Naive thymus-derived CD4-positive, alpha-beta T cell (primary cell): ENCODE measurements at regions of chr1 and their contacts with region 1.

Region 1: DNA sequence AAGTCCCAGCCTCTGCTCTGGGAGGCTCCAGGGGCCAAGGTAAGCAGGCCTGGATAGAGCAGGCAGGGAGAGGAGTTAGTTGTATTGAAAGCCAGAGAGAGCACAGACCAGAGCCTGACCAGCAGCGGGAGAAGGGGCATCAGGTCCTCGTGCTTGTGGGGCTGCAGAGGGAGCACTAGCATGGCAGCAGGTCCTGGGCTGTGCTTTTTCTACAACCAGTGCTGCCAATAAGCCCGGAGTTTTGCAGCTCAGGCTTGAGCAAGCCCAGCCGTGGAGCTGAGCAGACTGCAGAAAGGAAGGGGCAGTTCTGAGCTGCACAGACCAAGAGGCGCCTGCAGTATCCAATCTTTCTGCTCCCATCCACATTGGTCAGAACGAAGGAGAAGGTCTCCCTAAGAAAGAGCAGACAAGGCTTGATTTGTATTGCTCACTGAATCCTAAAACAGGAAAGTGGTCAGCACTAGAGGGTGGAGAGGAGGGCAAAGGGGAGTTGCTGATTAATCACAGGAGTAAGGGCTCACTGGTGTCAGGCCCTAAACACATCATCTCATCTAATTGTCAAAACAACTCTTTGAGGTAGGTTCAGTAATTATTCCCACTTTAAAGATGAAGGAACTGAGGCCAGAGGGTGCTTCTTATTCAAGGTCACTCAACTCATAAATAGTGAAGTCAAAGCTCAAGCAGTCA is 2.7 kb downstream of the DENND2D start:
- DNase-seq: peak in 7 of 9 donors; percentile 57 to 84 (median 78)
- ATAC-seq: peak; percentile 61
- H3K4me3 ChIP-seq: peak overlapping the region; percentile 84
- H3K4me3 Mint-ChIP-seq: peak overlapping the region; percentile 90 to 100 (median 99)
- H3K27ac ChIP-seq: peak overlapping the region; percentile 90
- H3K27ac Mint-ChIP-seq: peak overlapping the region; percentile 92 to 99 (median 96)
- H3K4me1 ChIP-seq: peaks cover 57 to 66% of the 10 kb centered on the region in 2 donors
- H3K4me1 Mint-ChIP-seq: peaks cover 47 to 75% (median 66%) of the 10 kb centered on the region in 7 donors
- H3K27me3 ChIP-seq: no peaks in the 10 kb centered on the region
- H3K27me3 Mint-ChIP-seq: no peaks in the 10 kb centered on the region

Region 2: GRCh38 chr1:111139956-111140679 is 57.6 kb before region 1 on chr1 and contains the starts of genes CEPT1 and DRAM2:
- CTCF ChIA-PET with region 1: interaction called, 3 read pairs
- POLR2A ChIA-PET with region 1: interaction called, 9 read pairs
- intact Hi-C with region 1: loop called in 1 of 2 experiments (anchors 5 kb)
- DNase-seq: peak; percentile 77 to 93 (median 89)
- ATAC-seq: peak; percentile 95
- H3K4me3 ChIP-seq: peak within 1 kb of the TSS; percentile 91
- H3K4me3 Mint-ChIP-seq: peak within 1 kb of the TSS; percentile 87 to 100 (median 98)
- H3K27ac ChIP-seq: peak within 1 kb of the TSS; percentile 93
- H3K27ac Mint-ChIP-seq: peak within 1 kb of the TSS; percentile 91 to 100 (median 97)
- H3K4me1 ChIP-seq: peaks cover 18 to 22% of the 10 kb centered on the region in 2 donors
- H3K4me1 Mint-ChIP-seq: peaks cover 40 to 75% (median 57%) of the 10 kb centered on the region in 7 donors
- H3K27me3 ChIP-seq: no peaks in the 10 kb centered on the region
- H3K27me3 Mint-ChIP-seq: no peaks in the 10 kb centered on the region
- total RNA-seq, gene CEPT1: 39.1 to 57.5 (median 40.2) TPM
- total RNA-seq, gene DRAM2: 26.9 to 51.6 (median 43.5) TPM

Region 3: GRCh38 chr1:111208922-111209321 is 11.2 kb after region 1 on chr1:
- CTCF ChIA-PET with region 1: interaction called, 341 read pairs
- POLR2A ChIA-PET with region 1: interaction called, 1,128 read pairs
- intact Hi-C with region 1: no loop called
- DNase-seq: no peak
- ATAC-seq: no peak
- H3K4me3 ChIP-seq: no peak overlapping the region
- H3K4me3 Mint-ChIP-seq: no peak overlapping the region
- H3K27ac ChIP-seq: no peak overlapping the region
- H3K27ac Mint-ChIP-seq: peak overlapping the region in 5 of 9 donors; percentile 2 to 99 (median 50)
- H3K4me1 ChIP-seq: peaks cover 20 to 37% of the 10 kb centered on the region in 2 donors
- H3K4me1 Mint-ChIP-seq: peaks cover 50 to 92% (median 84%) of the 10 kb centered on the region in 7 donors
- H3K27me3 ChIP-seq: no peaks in the 10 kb centered on the region
- H3K27me3 Mint-ChIP-seq: no peaks in the 10 kb centered on the region

Region 4: DNA sequence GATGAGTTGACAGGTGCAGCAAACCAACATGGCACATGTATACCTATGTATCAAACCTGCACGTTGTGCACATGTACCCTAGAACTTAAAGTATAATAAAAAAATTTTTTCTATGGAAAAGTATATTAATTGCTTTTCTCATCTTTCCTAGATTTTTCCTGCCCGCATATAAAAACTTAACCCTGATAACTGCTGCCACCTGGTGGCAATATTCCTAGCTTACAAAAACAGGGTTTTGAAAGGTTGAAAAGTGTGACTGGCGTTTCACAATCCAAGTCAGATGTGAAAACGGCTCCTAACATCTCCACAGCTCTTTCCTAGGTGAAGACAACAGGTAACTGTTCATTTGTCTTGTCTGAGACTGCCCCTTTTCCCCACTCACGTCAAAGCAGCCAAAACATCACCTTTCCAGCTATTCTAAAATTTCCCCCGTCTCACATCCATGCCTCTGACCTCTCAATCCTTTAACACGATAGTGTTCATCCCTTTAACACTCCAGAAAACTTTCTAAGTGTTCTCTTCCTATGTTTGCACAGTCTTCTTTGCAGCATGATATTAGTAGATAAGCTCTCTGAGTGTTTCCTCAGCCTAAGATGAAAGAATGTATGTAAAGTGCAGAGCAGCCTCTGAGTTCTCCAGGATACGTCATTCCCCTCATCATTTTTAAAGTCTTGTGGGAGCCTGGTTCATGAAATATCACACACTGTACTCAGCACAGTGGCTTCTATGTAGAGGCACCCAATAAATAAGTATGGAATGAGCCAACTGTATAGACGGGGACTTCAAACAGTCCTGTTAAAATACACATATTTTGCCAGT is 202.3 kb after region 1 on chr1:
- CTCF ChIA-PET with region 1: interaction called, 7 read pairs
- POLR2A ChIA-PET with region 1: no interaction called
- intact Hi-C with region 1: loop called in 1 of 2 experiments (anchors 2 kb)
- DNase-seq: peak in 6 of 9 donors; percentile 19 to 43 (median 32)
- ATAC-seq: no peak
- H3K4me3 ChIP-seq: no peak overlapping the region
- H3K4me3 Mint-ChIP-seq: peak overlapping the region in 1 of 10 donors; percentile 35
- H3K27ac ChIP-seq: no peak overlapping the region
- H3K27ac Mint-ChIP-seq: peak overlapping the region in 1 of 9 donors; percentile 46
- H3K4me1 ChIP-seq: no peaks in the 10 kb centered on the region
- H3K4me1 Mint-ChIP-seq: peaks cover 3 to 17% (median 13%) of the 10 kb centered on the region in 7 donors
- H3K27me3 ChIP-seq: no peaks in the 10 kb centered on the region
- H3K27me3 Mint-ChIP-seq: peaks cover 0 to 64% (median 0%) of the 10 kb centered on the region in 5 donors

Region 5: GRCh38 chr1:111520053-111520452 is 322.3 kb after region 1 on chr1:
- CTCF ChIA-PET with region 1: no interaction called
- POLR2A ChIA-PET with region 1: no interaction called
- intact Hi-C with region 1: no loop called
- DNase-seq: no peak
- ATAC-seq: no peak
- H3K4me3 ChIP-seq: no peak overlapping the region
- H3K4me3 Mint-ChIP-seq: no peak overlapping the region
- H3K27ac ChIP-seq: no peak overlapping the region
- H3K27ac Mint-ChIP-seq: peak overlapping the region in 1 of 9 donors; percentile 34
- H3K4me1 ChIP-seq: peaks cover 21 to 25% of the 10 kb centered on the region in 2 donors
- H3K4me1 Mint-ChIP-seq: peaks cover 21 to 35% (median 30%) of the 10 kb centered on the region in 7 donors
- H3K27me3 ChIP-seq: no peaks in the 10 kb centered on the region
- H3K27me3 Mint-ChIP-seq: peaks cover 0 to 13% (median 0%) of the 10 kb centered on the region in 5 donors